ENCODE measurements at regions of chr12 and their contacts with region 1.

Region 1: DNA sequence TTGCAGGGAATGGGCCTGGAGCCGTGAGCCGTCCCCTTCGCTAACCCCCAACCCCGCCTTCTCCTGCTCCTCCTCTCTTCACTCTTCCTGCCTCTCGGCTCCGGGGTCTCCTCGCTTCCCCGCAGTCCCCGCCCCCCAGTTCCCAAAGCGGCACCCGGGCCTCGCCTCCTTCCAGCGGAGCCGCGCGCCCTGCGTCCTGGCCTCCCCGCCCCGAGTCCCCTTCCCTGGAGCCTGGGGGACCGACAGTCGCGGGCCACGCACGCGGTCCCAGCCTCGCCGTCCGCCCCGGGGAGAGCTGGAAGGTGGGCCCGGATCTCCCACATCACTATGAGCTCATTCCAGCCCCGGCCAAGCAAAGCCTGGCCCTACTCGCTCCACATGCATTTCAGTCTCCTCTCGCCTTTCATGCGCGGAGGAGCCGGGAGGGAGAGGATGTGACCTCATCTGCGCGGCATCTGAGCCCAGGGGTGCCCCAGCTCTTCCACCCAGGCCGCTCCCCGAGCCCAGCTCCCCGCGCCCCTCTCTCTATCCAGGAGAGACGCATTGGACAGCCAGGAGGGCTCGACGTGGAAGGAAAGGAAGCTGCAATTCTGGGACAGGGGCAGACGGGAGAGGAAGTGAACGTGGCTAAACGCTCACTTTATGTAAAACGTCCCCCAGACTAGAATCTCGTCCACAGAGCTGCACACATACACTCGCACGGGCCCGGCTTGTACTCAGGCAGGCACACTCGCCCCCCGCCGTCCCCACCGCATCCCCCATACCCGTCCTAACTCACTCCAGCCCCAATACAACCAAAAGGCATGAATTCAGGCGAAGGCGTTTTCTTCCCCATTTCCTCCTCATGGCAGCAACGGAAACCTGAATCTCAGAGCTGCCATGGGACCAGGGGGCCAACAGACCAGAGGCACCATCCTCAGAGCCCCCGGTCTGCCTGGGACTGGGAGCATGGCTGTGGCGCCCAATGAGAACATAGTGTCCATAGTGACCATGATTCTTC is 108.7 kb upstream of the CCND2 start:
- DNase-seq: peak; percentile 76
- CTCF ChIP-seq: no peak

Region 2: GRCh38 chr12:4148418-4149056 is 16.3 kb before region 1 on chr12:
- CTCF ChIA-PET with region 1: interaction called, 16 read pairs
- POLR2A ChIA-PET with region 1: no interaction called
- DNase-seq: peak; percentile 47
- CTCF ChIP-seq: no peak